CD8-positive, alpha-beta T cell (primary cell): ENCODE measurements at regions of chr9 and their contacts with region 1.

Region 1: GRCh38 chr9:75027187-75028107 is 646 bp downstream of the CARNMT1 start:
- DNase-seq: peak in 8 of 9 experiments; percentile 20 to 69 (median 36)
- ATAC-seq: no peak
- H3K4me3 ChIP-seq: peak overlapping the region; percentile 60 to 72
- H3K4me3 Mint-ChIP-seq: peak overlapping the region; percentile 98
- H3K27ac ChIP-seq: peak overlapping the region; percentile 63 to 73
- H3K27ac Mint-ChIP-seq: peak overlapping the region; percentile 97
- H3K4me1 ChIP-seq: peaks cover 32% of the 10 kb centered on the region
- H3K4me1 Mint-ChIP-seq: peaks cover 49% of the 10 kb centered on the region
- H3K27me3 ChIP-seq: no peaks in the 10 kb centered on the region
- H3K27me3 Mint-ChIP-seq: no peaks in the 10 kb centered on the region
- CTCF ChIP-seq: no peak

Region 2: GRCh38 chr9:73149371-73150067 is 1877.9 kb before region 1 on chr9:
- CTCF ChIA-PET with region 1: no interaction called
- POLR2A ChIA-PET with region 1: no interaction called
- intact Hi-C with region 1: loop called in 1 of 2 experiments (anchors 10 kb)
- DNase-seq: peak in 2 of 9 experiments; percentile 66 to 73
- ATAC-seq: peak; percentile 59
- H3K4me3 ChIP-seq: no peak overlapping the region
- H3K4me3 Mint-ChIP-seq: peak overlapping the region; percentile 54
- H3K27ac ChIP-seq: peak overlapping the region in 1 of 2 experiments; percentile 44
- H3K27ac Mint-ChIP-seq: peak overlapping the region; percentile 69
- H3K4me1 ChIP-seq: peaks cover 51% of the 10 kb centered on the region
- H3K4me1 Mint-ChIP-seq: peaks cover 55% of the 10 kb centered on the region
- H3K27me3 ChIP-seq: no peaks in the 10 kb centered on the region
- H3K27me3 Mint-ChIP-seq: no peaks in the 10 kb centered on the region
- CTCF ChIP-seq: no peak

Region 3: GRCh38 chr9:74358959-74359358 is 668.5 kb before region 1 on chr9:
- CTCF ChIA-PET with region 1: no interaction called
- POLR2A ChIA-PET with region 1: no interaction called
- intact Hi-C with region 1: no loop called
- DNase-seq: no peak
- ATAC-seq: no peak
- H3K4me3 ChIP-seq: no peak overlapping the region
- H3K4me3 Mint-ChIP-seq: no peak overlapping the region
- H3K27ac ChIP-seq: no peak overlapping the region
- H3K27ac Mint-ChIP-seq: no peak overlapping the region
- H3K4me1 ChIP-seq: no peaks in the 10 kb centered on the region
- H3K4me1 Mint-ChIP-seq: no peaks in the 10 kb centered on the region
- H3K27me3 ChIP-seq: no peaks in the 10 kb centered on the region
- H3K27me3 Mint-ChIP-seq: no peaks in the 10 kb centered on the region
- CTCF ChIP-seq: no peak

Region 4: DNA sequence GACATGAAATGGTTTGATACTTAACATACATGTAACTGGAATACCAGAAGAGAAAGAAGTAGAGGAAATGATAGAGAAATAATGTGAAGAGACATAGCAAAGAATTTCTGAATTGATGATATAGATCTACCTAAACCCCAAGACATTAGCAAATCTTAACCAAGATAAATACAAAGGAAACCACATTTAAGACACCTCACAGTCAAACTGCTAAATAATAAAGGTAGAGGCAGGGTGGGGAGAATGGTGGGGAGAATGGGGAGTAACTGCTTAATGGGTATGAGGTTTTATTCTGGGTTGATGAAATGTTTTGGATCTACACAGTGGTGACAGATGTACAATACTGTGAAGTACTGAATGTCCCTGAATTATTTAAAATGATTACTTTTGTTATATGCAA is 16.9 kb before region 1 on chr9:
- CTCF ChIA-PET with region 1: interaction called, 6 read pairs
- POLR2A ChIA-PET with region 1: interaction called, 11 read pairs
- intact Hi-C with region 1: loop called in 1 of 2 experiments (anchors 2 kb)
- DNase-seq: peak in 2 of 9 experiments; percentile 26 to 45
- ATAC-seq: peak; percentile 55
- H3K4me3 ChIP-seq: no peak overlapping the region
- H3K4me3 Mint-ChIP-seq: no peak overlapping the region
- H3K27ac ChIP-seq: no peak overlapping the region
- H3K27ac Mint-ChIP-seq: peak overlapping the region; percentile 63
- H3K4me1 ChIP-seq: peaks cover 20% of the 10 kb centered on the region
- H3K4me1 Mint-ChIP-seq: peaks cover 31% of the 10 kb centered on the region
- H3K27me3 ChIP-seq: no peaks in the 10 kb centered on the region
- H3K27me3 Mint-ChIP-seq: no peaks in the 10 kb centered on the region
- CTCF ChIP-seq: no peak

Region 5: GRCh38 chr9:75148561-75148960 is 121.1 kb after region 1 on chr9:
- CTCF ChIA-PET with region 1: interaction called, 3 read pairs
- POLR2A ChIA-PET with region 1: interaction called, 4 read pairs
- intact Hi-C with region 1: loop called in 1 of 2 experiments (anchors 5 kb)
- DNase-seq: peak in 2 of 9 experiments; percentile 16 to 34
- ATAC-seq: no peak
- H3K4me3 ChIP-seq: no peak overlapping the region
- H3K4me3 Mint-ChIP-seq: peak overlapping the region; percentile 55
- H3K27ac ChIP-seq: peak overlapping the region; percentile 12 to 70
- H3K27ac Mint-ChIP-seq: peak overlapping the region; percentile 88
- H3K4me1 ChIP-seq: peaks cover 78% of the 10 kb centered on the region
- H3K4me1 Mint-ChIP-seq: peaks cover 84% of the 10 kb centered on the region
- H3K27me3 ChIP-seq: no peaks in the 10 kb centered on the region
- H3K27me3 Mint-ChIP-seq: no peaks in the 10 kb centered on the region
- CTCF ChIP-seq: no peak

Region 6: DNA sequence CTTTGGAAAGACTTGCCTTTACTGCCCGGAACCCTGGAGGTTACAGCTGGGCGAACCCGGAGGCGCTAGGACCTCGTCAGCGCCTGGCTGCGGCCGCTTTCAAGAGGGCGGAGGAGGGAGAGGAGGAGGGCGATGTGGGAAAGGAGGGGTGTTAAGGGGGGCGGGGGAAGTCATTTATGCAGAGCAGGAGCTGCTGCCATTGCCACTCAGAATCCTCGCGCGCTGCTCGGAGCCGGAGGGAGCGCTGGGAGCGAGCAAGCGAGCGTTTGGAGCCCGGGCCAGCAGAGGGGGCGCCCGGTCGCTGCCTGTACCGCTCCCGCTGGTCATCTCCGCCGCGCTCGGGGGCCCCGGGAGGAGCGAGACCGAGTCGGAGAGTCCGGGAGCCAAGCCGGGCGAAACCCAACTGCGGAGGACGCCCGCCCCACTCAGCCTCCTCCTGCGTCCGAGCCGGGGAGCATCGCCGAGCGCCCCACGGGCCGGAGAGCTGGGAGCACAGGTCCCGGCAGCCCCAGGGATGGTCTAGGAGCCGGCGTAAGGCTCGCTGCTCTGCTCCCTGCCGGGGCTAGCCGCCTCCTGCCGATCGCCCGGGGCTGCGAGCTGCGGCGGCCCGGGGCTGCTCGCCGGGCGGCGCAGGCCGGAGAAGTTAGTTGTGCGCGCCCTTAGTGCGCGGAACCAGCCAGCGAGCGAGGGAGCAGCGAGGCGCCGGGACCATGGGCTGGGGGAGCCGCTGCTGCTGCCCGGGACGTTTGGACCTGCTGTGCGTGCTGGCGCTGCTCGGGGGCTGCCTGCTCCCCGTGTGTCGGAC is 863.2 kb after region 1 on chr9 and contains the start of gene PCSK5:
- CTCF ChIA-PET with region 1: no interaction called
- POLR2A ChIA-PET with region 1: no interaction called
- intact Hi-C with region 1: loop called in 1 of 2 experiments (anchors 1 kb)
- DNase-seq: peak; percentile 66 to 92 (median 85)
- ATAC-seq: peak; percentile 90
- H3K4me3 ChIP-seq: peak within 1 kb of the TSS; percentile 81 to 82
- H3K4me3 Mint-ChIP-seq: peak within 1 kb of the TSS; percentile 92
- H3K27ac ChIP-seq: peak within 1 kb of the TSS; percentile 60 to 70
- H3K27ac Mint-ChIP-seq: peak within 1 kb of the TSS; percentile 85
- H3K4me1 ChIP-seq: peaks cover 16% of the 10 kb centered on the region
- H3K4me1 Mint-ChIP-seq: peaks cover 54% of the 10 kb centered on the region
- H3K27me3 ChIP-seq: peaks cover 0 to 6% of the 10 kb centered on the region in 2 experiments
- H3K27me3 Mint-ChIP-seq: no peaks in the 10 kb centered on the region
- CTCF ChIP-seq: no peak
- total RNA-seq, gene PCSK5: 13.7 to 13.8 TPM

Region 7: DNA sequence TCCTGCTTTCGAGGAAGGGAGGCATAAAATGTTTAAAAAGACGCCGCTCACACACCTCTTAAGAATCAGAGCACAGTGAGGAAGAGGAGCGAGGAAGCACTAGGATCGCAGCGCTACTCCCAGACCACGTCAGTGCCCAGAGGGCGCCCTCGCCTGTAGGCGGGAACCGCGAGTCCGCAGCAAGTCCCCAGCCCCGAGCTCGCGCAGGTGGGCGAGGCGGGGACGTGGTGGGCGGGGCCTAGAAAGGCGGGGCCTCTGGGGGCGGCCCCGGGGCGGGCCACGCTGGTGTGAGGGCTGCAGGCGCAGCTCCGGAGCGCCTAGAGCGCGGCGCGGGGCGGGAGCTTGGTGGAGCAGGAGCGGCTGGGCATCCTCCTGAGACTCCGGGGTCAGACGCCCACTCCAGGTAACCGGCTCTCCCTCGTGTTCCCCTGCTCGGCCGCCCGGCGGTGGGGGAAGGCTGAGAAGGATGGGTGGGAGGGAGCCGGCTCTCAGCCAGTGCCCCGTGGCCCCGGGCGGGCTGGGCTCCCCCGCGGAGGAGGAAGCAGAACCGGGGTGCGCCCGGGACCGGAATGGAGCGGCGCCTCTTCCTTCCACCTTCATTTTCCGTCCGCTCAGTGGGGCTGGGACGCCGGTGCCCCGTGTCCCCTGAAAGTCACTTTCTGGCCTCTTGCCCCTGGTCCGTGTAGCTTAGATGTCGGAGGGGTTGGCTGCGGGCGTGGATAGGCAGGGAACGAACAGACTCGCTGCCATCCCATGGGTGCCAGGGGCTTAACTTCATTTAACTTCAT is 1431.7 kb after region 1 on chr9 and contains the start of gene GCNT1:
- CTCF ChIA-PET with region 1: no interaction called
- POLR2A ChIA-PET with region 1: no interaction called
- intact Hi-C with region 1: loop called in 1 of 2 experiments (anchors 2 kb)
- DNase-seq: peak; percentile 77 to 93 (median 90)
- ATAC-seq: peak; percentile 95
- H3K4me3 ChIP-seq: peak within 1 kb of the TSS; percentile 69 to 89
- H3K4me3 Mint-ChIP-seq: peak within 1 kb of the TSS; percentile 94
- H3K27ac ChIP-seq: peak within 1 kb of the TSS in 1 of 2 experiments; percentile 31
- H3K27ac Mint-ChIP-seq: peak within 1 kb of the TSS; percentile 72
- H3K4me1 ChIP-seq: peaks cover 11% of the 10 kb centered on the region
- H3K4me1 Mint-ChIP-seq: peaks cover 19% of the 10 kb centered on the region
- H3K27me3 ChIP-seq: no peaks in the 10 kb centered on the region
- H3K27me3 Mint-ChIP-seq: no peaks in the 10 kb centered on the region
- CTCF ChIP-seq: no peak
- total RNA-seq, gene GCNT1: 0.35 to 0.47 TPM